ENCODE measurements at regions of chr6 and their contacts with region 1.

Region 1: GRCh38 chr6:142485256-142485655 is 183.4 kb downstream of the ADGRG6 start:
- DNase-seq: no peak
- ATAC-seq: no peak
- H3K4me3 ChIP-seq: no peak overlapping the region
- H3K27ac ChIP-seq: no peak overlapping the region
- H3K4me1 ChIP-seq: no peaks in the 10 kb centered on the region
- H3K27me3 ChIP-seq: peaks cover 0 to 3% (median 0%) of the 10 kb centered on the region in 7 donors
- CTCF ChIP-seq: no peak

Region 2: DNA sequence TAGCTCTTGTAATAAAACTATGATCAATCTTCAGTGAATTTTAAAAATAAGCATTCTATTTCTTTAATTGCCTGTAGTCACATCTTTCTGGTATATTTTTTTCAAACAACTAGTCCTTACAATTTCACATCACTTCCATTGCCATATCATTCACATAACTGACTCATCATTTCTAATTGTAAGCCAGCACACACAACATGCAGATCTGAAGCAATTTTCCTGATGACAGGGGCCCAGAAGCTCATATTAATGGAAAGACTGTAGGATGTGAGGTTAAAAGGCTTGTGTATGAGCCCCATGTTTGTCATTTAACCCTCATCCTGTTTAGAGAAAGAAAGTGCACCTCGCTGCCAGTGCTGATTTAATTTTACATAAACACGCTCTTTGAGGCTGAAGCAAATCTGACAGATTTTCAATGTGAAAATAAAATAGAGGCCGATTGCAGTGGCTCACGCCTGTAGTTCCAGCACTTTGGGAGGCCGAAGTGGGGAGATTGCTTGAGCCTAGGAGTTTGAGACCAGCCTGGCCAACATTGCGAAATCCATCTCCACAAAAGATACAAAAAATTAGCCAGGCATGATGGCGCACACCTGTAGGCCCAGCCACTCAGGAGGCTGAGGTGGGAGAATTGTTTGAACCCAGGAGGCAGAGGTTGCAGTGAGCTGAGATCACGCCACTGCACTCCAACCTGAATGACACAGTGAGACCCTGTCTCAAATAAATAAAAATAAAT is 1317.7 kb after region 1 on chr6:
- intact Hi-C with region 1: loop called in 1 of 10 experiments (anchors 5 kb)
- DNase-seq: no peak
- ATAC-seq: no peak
- H3K4me3 ChIP-seq: no peak overlapping the region
- H3K27ac ChIP-seq: no peak overlapping the region
- H3K4me1 ChIP-seq: peaks cover 0 to 51% (median 11%) of the 10 kb centered on the region in 9 donors
- H3K27me3 ChIP-seq: no peaks in the 10 kb centered on the region
- CTCF ChIP-seq: no peak

Measured in heart right ventricle (tissue), 16 donors.